Psoas muscle (tissue), 8 donors: ENCODE measurements at regions of chr1 and their contacts with region 1.

Region 1: GRCh38 chr1:12619792-12620487 is 1.9 kb upstream of the DHRS3 start:
- DNase-seq: peak; percentile 86 to 91
- ATAC-seq: peak; percentile 61 to 64 (median 62)
- H3K4me3 ChIP-seq: peak overlapping the region; percentile 85
- H3K27ac ChIP-seq: peak overlapping the region; percentile 96
- H3K4me1 ChIP-seq: peaks cover 31% of the 10 kb centered on the region
- H3K27me3 ChIP-seq: no peaks in the 10 kb centered on the region
- CTCF ChIP-seq: peak; percentile 98

Region 2: GRCh38 chr1:12314333-12314903 is 305.5 kb before region 1 on chr1:
- intact Hi-C with region 1: loop called in 1 of 2 experiments (anchors 5 kb)
- DNase-seq: no peak
- ATAC-seq: peak in 1 of 4 donors; percentile 40
- H3K4me3 ChIP-seq: no peak overlapping the region
- H3K27ac ChIP-seq: no peak overlapping the region
- H3K4me1 ChIP-seq: peaks cover 17% of the 10 kb centered on the region
- H3K27me3 ChIP-seq: no peaks in the 10 kb centered on the region
- CTCF ChIP-seq: peak; percentile 46

Region 3: DNA sequence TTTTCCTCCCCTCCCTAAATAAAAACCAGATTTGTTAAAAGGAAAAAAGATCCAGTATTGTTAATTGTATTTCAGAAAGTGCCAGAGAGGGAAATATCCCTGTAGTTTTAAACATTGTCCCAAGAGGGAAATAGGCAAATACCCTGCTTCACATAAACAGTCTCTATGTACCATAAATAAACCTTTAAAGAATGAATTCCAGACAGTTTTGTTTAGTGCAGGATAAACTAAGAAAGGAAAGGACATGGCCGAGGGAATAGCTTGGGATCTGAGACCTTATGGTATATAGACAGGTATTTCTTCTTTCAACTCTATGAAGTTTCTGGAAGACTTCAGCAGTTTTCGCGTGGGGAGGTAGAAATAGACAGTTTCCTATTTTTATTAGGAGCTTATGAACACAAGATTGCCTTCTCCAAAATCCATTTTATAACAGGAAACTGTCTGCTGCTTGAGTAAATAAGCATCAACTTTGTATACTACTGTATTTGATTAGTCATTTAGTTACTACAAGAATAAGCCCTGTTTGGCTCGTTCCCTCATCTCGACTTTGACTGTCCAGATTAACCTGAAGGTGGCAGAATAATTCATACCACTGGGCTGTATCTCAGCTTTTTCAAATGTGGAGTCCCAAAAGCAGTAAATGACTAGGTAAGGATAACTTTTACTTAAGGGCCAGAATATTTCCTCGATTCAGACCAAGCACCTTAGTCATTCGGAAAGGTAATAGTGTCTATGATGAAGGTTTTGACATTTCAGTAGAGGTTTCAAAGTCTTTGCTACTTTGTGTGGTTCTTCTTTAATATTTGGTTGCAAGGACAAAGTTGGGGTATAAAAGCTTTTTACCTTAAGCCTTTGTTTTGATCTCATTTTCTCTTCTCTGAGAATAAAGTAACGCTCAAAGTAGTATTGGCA is 212.6 kb before region 1 on chr1:
- intact Hi-C with region 1: loop called (anchors 2 to 5 kb)
- DNase-seq: no peak
- ATAC-seq: peak; percentile 69 to 93 (median 86)
- H3K4me3 ChIP-seq: no peak overlapping the region
- H3K27ac ChIP-seq: peak overlapping the region; percentile 66
- H3K4me1 ChIP-seq: peaks cover 48% of the 10 kb centered on the region
- H3K27me3 ChIP-seq: no peaks in the 10 kb centered on the region
- CTCF ChIP-seq: peak; percentile 56

Region 4: DNA sequence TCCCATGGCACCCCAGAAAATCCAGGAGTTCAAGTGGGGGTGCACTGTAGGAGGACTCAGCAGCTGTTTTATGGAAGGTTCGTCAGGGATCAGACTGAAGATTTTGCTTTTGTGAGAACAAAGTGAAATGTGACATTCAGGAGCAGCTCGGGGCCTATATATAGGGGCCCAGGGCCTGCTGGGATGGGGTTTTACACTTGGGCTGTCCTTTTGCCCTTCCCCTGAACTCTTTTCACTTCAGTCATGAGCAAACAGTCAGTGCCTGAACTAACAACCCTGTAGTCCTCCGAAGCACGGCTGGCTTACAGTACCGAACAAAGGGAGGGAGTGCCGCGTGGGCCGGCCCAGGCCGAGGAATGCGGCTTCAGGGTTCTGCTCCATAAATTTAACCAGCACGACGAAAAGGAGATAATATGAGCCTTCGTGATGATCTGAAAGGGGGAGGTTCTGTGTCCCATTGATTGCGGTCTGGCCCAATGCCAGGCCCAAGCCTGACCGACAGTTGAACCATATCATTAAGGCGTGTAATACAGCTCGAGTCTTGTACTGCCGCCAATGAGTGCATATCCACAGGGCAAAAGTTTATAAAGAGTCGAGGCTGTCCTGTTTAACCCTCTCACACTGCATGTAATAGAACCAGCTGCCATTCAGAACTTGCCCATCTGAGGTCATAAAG is 141.9 kb before region 1 on chr1:
- intact Hi-C with region 1: loop called in 1 of 2 experiments (anchors 1 kb)
- DNase-seq: peak; percentile 81 to 88
- ATAC-seq: peak; percentile 39 to 57 (median 53)
- H3K4me3 ChIP-seq: peak overlapping the region; percentile 21
- H3K27ac ChIP-seq: peak overlapping the region; percentile 79
- H3K4me1 ChIP-seq: peaks cover 87% of the 10 kb centered on the region
- H3K27me3 ChIP-seq: no peaks in the 10 kb centered on the region
- CTCF ChIP-seq: no peak

Region 5: GRCh38 chr1:12539705-12540579 is 80.0 kb before region 1 on chr1:
- intact Hi-C with region 1: loop called (anchors 5 kb)
- DNase-seq: peak; percentile 90 to 92
- ATAC-seq: peak; percentile 91 to 94 (median 92)
- H3K4me3 ChIP-seq: peak overlapping the region; percentile 53
- H3K27ac ChIP-seq: peak overlapping the region; percentile 85
- H3K4me1 ChIP-seq: peaks cover 21% of the 10 kb centered on the region
- H3K27me3 ChIP-seq: no peaks in the 10 kb centered on the region
- CTCF ChIP-seq: no peak

Region 6: DNA sequence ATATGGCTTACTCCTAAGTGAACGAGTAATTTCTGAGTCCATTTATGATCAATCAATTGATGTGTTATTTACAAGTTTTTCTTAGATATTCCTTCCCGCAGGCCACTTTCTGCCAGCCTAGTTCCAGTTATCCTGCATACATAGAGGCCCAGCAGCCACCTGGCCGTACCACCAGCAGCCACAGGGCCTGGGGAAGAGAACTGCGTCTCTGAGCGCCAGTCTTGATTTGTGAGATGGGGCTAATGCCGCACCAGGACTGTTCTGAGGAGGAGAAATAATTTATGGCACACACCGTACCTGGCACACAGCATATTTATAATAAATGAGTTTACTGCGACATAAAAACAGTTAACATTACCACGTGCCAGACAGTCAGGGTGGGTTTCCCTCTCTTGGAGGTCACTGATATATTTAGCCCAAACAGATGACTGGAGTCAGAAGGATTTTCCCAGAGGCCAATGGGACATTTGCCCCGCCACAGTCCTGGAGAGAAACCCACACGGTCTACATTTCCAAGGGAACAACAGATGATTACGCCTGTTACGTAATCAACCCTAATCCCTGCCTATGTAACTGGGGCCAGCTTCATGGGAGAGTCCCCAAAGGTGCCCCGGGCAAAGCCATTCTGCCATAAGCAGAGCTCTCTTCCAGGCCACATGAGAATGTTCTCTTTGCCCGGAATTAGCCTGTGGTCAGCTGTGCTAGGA is 40.0 kb before region 1 on chr1:
- intact Hi-C with region 1: no loop called
- DNase-seq: peak; percentile 73 to 81
- ATAC-seq: peak; percentile 89 to 94 (median 92)
- H3K4me3 ChIP-seq: peak overlapping the region; percentile 6
- H3K27ac ChIP-seq: peak overlapping the region; percentile 85
- H3K4me1 ChIP-seq: peaks cover 21% of the 10 kb centered on the region
- H3K27me3 ChIP-seq: no peaks in the 10 kb centered on the region
- CTCF ChIP-seq: no peak

Region 7: DNA sequence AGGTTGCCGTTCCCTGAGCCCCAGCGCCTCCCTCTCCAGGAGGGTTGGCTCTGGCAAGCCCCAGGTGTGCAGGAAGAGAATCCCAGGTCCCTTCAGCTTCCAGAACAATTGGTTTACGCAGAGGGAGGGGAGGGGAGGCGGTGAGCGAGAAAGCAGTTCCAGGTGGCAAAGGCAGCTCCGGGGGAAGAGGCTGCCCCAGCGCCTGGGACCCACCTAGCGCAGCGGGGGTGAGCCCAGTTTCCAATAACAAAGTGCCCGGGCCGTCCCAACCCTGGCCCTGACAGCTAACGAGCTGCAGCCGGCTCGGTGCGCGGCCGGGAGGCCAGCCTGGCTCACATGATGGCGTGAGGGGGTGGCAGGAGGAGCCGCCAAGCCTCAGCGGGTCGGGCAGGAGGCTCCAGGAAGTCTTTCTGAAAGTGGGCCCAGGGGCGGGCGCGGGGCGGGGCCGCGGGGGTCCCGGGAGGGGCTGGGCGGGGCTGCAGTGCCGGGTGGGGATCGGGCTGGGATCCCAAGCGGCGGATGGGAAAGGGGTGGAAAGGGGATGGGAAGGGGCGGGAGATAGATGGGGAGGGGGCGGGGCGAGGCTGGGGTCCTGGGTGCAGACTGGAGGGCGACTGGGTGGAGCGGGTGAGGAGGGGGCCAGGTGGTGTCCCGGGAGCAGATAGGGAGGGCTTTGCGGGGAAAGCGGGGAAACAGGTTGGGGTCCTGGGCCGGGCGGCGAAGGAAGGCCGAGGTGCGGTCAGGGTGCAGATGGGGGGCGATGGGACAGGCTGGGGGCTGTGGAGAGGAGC is 24.8 kb before region 1 on chr1:
- intact Hi-C with region 1: loop called in 1 of 2 experiments (anchors 2 kb)
- DNase-seq: peak; percentile 80 to 81
- ATAC-seq: peak in 2 of 4 donors; percentile 11 to 13
- H3K4me3 ChIP-seq: peak overlapping the region; percentile 63
- H3K27ac ChIP-seq: peak overlapping the region; percentile 93
- H3K4me1 ChIP-seq: peaks cover 85% of the 10 kb centered on the region
- H3K27me3 ChIP-seq: no peaks in the 10 kb centered on the region
- CTCF ChIP-seq: no peak

Region 8: GRCh38 chr1:12658531-12659453 is 38.9 kb after region 1 on chr1:
- intact Hi-C with region 1: loop called in 1 of 2 experiments (anchors 2 kb)
- DNase-seq: peak; percentile 59 to 75
- ATAC-seq: peak; percentile 81 to 94 (median 87)
- H3K4me3 ChIP-seq: no peak overlapping the region
- H3K27ac ChIP-seq: no peak overlapping the region
- H3K4me1 ChIP-seq: no peaks in the 10 kb centered on the region
- H3K27me3 ChIP-seq: no peaks in the 10 kb centered on the region
- CTCF ChIP-seq: peak; percentile 98

Region 9: DNA sequence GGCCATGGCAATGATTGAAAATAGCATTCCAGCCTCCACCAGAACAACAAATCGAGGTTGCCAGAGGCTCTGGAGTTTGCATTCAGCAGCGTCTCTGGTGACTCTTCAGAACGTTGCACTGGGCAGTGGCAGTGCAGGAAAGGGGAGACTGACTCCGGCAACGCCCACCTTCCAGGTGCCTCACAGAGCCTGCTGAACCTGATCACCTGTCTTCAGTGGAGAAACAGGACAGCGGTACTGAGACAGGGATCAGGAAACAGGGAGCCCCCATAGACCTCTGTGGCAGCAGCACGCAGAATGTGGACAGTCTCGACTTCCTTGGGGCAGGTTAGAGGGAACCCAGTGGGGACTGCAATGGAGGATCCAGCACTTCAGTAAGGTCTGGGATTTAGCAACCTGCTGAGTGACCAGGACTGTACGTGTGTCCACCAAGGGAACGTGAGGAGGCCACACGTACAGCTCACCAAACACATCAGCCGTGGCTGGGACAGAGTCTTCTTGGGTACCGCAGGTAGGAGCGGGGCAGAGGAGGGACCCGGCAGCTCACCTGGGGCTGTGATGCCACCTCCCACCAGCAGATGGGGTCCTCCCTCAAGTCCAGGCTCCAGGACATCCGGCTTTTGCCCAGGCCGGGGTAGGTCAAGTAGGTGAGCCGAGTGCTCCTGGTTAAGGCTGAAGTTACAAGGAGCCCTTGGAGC is 1208.7 kb after region 1 on chr1:
- intact Hi-C with region 1: no loop called
- DNase-seq: peak in 1 of 2 donors; percentile 67
- ATAC-seq: peak; percentile 40 to 67 (median 59)
- H3K4me3 ChIP-seq: no peak overlapping the region
- H3K27ac ChIP-seq: no peak overlapping the region
- H3K4me1 ChIP-seq: no peaks in the 10 kb centered on the region
- H3K27me3 ChIP-seq: no peaks in the 10 kb centered on the region
- CTCF ChIP-seq: peak; percentile 43